ENCODE measurements at regions of chr6 and their contacts with region 1.

Region 1: DNA sequence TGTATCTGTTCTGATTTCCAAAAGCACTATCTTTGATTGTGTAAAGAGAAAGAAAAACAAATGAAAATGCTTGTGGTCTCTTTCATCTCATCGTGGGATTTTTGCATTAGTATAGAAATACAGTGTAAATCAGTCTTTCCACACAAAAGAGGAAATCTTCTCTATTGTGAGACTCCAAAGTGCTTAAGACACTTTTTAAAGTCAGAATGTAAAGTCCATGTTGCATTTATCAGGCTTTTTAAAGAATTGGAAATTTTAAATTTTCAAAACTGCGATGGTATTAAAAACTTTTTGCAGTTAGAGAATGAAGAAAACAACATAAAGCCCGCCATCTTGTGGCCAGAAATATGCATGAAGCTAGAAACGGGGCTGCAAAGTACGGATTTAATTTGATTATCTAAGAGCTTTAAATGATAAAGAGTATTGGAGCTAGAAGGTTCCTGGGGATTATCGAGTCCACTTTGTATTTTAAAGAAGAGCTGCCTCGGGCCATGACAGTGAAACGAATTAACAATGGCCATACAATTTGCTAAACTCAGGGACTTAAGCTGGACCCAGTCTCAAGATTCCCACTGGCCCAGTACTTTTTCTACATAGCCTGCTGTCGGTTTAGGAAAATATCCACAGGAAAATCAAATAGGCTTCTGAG is 339.6 kb downstream of the ARHGAP18 start:
- DNase-seq: peak; percentile 65
- H3K4me3 ChIP-seq: no peak overlapping the region
- H3K27ac ChIP-seq: no peak overlapping the region
- H3K4me1 ChIP-seq: no peaks in the 10 kb centered on the region
- H3K27me3 ChIP-seq: no peaks in the 10 kb centered on the region
- CTCF ChIP-seq: peak; percentile 42 to 55
- POLR2A ChIP-seq: no peak

Region 2: DNA sequence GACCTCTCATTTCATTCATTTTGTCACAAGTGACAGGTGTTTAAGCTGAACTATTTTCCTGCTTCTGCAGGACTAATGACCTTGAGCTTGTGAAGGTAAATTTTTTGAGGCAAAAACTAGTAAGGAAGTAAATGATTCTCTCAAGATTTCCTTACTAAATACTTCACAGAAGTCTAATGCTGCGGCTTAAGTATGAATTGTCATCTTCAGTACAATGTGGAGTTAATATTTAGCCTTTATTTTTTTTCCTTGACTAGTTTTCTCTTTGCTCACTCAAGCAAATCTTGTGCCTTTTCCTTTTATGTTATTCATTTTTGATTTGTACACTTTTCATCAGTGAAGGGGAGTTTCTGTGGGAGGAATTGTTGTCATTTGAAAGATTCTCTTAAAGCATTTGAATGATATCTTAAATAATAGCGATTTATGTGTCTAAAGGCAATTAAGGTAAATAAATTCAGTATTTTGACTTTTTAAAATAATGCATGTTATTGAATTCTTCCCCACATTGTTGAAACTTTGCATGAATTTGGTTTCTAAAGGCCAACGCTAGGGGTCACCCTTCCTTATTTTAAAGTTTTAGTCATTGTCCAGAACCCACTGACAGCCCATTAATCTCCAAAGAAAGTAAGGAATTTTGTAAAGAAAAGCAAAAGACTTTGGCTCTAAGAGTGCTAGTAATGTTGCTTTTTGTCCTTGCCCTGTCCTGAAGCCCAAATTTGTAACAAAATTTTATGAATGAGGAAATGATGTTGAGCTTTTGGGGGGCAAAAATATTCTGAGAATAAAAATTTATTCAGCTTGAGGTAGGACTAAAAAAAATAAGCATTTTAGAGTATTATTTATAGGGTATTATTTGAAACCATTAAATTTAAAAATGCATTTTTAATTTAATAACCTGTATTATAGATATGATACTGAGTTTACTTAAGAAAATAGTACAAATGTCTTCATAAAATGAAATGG is 644.8 kb before region 1 on chr6:
- CTCF ChIA-PET with region 1: interaction called, 12 read pairs
- POLR2A ChIA-PET with region 1: no interaction called
- dilution Hi-C with region 1: no loop called
- intact Hi-C with region 1: loop called (anchors 5 kb)
- DNase-seq: peak; percentile 44
- H3K4me3 ChIP-seq: no peak overlapping the region
- H3K27ac ChIP-seq: no peak overlapping the region
- H3K4me1 ChIP-seq: no peaks in the 10 kb centered on the region
- H3K27me3 ChIP-seq: peaks cover 0 to 5% of the 10 kb centered on the region in 2 experiments
- CTCF ChIP-seq: peak; percentile 50 to 55
- POLR2A ChIP-seq: no peak

Region 3: DNA sequence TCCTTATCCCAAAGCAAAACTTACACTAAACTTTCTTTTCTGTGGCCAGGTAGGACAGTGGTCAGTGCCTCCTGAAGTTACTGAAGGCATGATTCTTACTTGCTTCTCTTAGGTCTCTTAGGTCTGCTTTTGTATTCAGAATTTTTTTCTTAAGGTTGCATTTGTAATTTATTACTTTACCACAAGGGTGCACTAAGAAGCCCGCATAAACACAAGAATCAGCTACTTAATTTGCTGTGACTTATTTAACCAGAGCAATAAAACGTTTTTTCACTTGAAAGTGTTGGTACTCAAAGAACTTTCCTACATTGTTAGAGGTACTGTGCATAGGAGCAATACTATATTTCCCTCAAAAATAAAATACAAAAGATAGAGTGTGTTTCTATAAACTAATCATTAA is 562.8 kb before region 1 on chr6:
- CTCF ChIA-PET with region 1: interaction called, 91 read pairs
- POLR2A ChIA-PET with region 1: no interaction called
- dilution Hi-C with region 1: no loop called
- intact Hi-C with region 1: loop called (anchors 1 kb)
- DNase-seq: peak; percentile 62
- H3K4me3 ChIP-seq: no peak overlapping the region
- H3K27ac ChIP-seq: no peak overlapping the region
- H3K4me1 ChIP-seq: peaks cover 10% of the 10 kb centered on the region
- H3K27me3 ChIP-seq: peaks cover 7 to 11% of the 10 kb centered on the region in 2 experiments
- CTCF ChIP-seq: peak; percentile 19 to 35
- POLR2A ChIP-seq: no peak

Region 4: GRCh38 chr6:128929871-128930270 is 440.5 kb before region 1 on chr6:
- CTCF ChIA-PET with region 1: no interaction called
- POLR2A ChIA-PET with region 1: no interaction called
- dilution Hi-C with region 1: no loop called
- intact Hi-C with region 1: no loop called
- DNase-seq: no peak
- H3K4me3 ChIP-seq: no peak overlapping the region
- H3K27ac ChIP-seq: no peak overlapping the region
- H3K4me1 ChIP-seq: no peaks in the 10 kb centered on the region
- H3K27me3 ChIP-seq: peaks cover 3% of the 10 kb centered on the region in 2 experiments
- CTCF ChIP-seq: no peak
- POLR2A ChIP-seq: no peak

Region 5: DNA sequence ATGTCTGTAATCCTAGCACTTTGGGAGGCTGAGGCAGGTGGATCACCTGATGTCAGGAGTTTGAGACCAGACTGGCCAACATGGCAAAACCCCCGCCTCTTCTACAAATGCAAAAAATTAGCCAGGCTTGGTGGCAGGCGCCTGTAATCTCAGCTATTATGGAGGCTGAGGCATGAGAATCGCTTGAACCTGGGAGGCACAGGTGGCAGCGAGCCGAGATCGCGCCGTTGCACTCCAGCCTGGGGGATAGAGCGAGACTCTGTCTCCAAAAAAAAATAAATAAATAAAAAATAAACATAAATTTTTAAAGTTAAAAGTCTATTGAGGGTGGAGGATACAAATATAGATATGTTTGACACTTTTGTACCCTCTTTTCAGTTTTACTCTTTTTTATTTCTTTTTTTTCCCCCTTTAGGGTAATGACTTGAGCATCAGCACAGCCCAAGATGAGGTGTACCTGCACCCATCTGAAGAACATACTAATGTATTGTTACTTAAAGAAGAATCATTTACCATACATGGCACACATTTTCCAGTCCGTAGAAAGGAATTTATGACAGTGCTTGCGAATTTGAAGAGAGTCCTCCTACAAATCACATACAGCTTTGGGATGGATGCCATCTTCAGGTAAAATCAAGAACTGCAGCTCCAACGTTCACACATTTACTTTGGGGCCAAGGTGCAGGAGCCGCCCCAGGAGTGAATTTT is 118.6 kb before region 1 on chr6:
- CTCF ChIA-PET with region 1: interaction called, 62 read pairs
- POLR2A ChIA-PET with region 1: no interaction called
- dilution Hi-C with region 1: no loop called
- intact Hi-C with region 1: loop called (anchors 1 kb)
- DNase-seq: peak; percentile 76
- H3K4me3 ChIP-seq: no peak overlapping the region
- H3K27ac ChIP-seq: no peak overlapping the region
- H3K4me1 ChIP-seq: no peaks in the 10 kb centered on the region
- H3K27me3 ChIP-seq: peaks cover 11 to 28% of the 10 kb centered on the region in 2 experiments
- CTCF ChIP-seq: peak; percentile 74 to 76
- POLR2A ChIP-seq: no peak

Region 6: DNA sequence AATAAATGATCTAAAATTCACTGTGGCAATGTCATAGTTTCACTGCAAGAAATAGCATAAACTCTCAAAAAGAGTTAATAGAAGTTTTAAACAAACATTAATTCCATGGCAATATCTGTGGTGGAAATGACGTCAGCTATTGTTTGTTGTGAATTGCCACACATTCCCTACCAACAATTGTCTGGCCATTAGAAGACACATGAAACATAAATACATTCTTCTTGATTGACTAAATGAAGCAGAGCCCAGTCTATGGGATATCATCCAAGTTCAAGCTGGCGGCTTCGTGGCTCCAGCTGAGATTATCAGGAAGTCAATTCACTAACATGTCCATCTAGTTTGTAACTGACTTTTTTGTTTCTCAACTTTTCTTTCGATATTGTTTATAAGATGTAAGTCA is 29.4 kb before region 1 on chr6:
- CTCF ChIA-PET with region 1: interaction called, 12 read pairs
- POLR2A ChIA-PET with region 1: no interaction called
- dilution Hi-C with region 1: no loop called
- intact Hi-C with region 1: no loop called
- DNase-seq: peak; percentile 90
- H3K4me3 ChIP-seq: no peak overlapping the region
- H3K27ac ChIP-seq: peak overlapping the region; percentile 62
- H3K4me1 ChIP-seq: peaks cover 29% of the 10 kb centered on the region
- H3K27me3 ChIP-seq: no peaks in the 10 kb centered on the region
- CTCF ChIP-seq: no peak
- POLR2A ChIP-seq: no peak

Region 7: DNA sequence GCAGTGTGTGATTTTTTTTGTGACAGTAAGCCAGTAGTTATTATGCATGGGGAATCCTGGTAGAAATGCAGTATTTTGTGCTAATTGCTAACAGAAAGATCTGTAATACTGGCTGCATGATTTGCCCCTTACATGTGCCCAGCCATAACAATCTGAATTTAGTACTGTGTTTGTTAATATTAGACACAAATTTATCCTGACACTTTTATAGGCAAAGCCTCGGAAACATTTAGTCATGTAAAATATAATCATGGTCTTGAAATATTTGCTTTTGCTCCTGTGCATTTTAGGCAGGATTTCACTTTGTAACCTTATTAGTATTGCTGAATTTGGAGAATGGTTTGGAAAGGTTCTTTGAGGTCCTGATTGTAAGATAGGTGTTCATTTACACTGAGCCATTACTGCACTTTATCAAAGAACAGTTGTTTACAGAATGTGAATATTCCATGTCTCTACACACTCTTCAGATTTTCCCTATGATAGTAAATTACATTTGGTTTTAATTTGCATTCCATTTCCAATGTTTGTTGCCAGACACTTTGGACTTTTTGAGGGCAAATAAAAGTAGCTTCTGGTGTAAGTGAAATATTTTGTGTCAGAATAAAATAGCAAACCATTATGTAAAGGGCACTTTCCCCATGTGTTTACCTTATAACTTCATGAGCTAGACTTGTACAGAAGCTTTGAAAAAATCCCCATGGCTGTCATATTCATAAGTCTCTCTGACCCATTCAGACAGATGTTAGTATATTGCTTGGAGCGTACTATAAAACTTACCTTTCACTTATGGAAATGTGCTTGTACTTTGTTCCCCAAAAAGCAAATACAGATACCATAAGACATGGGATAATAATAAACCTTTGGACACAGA is 10.3 kb before region 1 on chr6:
- CTCF ChIA-PET with region 1: interaction called, 15 read pairs
- POLR2A ChIA-PET with region 1: no interaction called
- dilution Hi-C with region 1: no loop called
- intact Hi-C with region 1: no loop called
- DNase-seq: no peak
- H3K4me3 ChIP-seq: no peak overlapping the region
- H3K27ac ChIP-seq: no peak overlapping the region
- H3K4me1 ChIP-seq: no peaks in the 10 kb centered on the region
- H3K27me3 ChIP-seq: no peaks in the 10 kb centered on the region
- CTCF ChIP-seq: no peak
- POLR2A ChIP-seq: no peak